ENCODE measurements at regions of chr7 and their contacts with region 1.

Region 1: DNA sequence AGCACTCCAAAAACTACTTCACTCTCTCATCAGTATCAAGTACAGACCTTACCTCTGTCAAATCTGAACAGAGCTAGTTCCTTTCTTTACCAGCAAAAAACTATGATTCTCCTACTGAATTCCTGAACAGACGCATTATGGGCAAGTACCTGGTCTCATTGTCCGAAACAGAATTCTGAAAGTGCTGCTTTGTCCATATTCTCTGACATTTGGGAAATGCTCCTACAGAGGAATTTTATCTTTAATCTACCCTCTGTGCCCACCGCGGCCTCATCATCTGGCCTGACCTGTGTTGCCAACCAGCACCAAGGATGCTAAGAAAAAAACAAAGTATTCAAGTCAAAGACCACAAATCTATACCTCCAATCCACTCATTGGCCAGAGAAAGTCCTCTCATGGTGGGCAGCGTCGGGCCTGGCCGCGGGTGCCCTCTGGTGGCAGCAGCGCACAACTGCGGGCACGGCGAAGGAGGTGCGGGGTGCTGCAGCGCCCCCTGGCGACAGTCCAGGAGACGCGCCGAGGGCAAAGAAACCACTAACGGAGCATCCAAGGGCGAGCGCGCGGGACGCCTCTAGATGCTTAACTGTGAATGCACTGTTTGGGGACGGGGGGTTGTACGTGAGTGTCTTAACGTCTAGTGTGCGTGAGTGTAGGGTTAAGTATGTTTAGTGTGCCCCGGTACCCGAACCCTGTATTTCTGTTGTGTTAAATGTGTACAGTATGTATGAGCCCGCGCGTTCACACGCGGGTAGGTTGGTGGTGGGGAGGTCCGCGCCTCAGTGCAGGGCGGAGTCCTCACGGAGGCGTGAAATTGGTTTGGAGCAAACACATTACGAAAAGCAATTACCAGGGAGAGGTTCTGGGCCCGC is 5.0 kb upstream of the GBX1 start:
- H3K4me3 ChIP-seq: no peak overlapping the region
- H3K27ac ChIP-seq: no peak overlapping the region
- H3K4me1 ChIP-seq: no peaks in the 10 kb centered on the region
- CTCF ChIP-seq: peak; percentile 100

Region 2: GRCh38 chr7:151123822-151124464 is 48.6 kb before region 1 on chr7:
- CTCF ChIA-PET with region 1: interaction called, 20 read pairs
- POLR2A ChIA-PET with region 1: no interaction called
- H3K4me3 ChIP-seq: no peak overlapping the region
- H3K27ac ChIP-seq: no peak overlapping the region
- H3K4me1 ChIP-seq: no peaks in the 10 kb centered on the region
- CTCF ChIP-seq: peak; percentile 99

Region 3: GRCh38 chr7:151146761-151147160 is 25.7 kb before region 1 on chr7:
- CTCF ChIA-PET with region 1: interaction called, 12 read pairs
- POLR2A ChIA-PET with region 1: no interaction called
- H3K4me3 ChIP-seq: no peak overlapping the region
- H3K27ac ChIP-seq: no peak overlapping the region
- H3K4me1 ChIP-seq: no peaks in the 10 kb centered on the region
- CTCF ChIP-seq: no peak

Region 4: DNA sequence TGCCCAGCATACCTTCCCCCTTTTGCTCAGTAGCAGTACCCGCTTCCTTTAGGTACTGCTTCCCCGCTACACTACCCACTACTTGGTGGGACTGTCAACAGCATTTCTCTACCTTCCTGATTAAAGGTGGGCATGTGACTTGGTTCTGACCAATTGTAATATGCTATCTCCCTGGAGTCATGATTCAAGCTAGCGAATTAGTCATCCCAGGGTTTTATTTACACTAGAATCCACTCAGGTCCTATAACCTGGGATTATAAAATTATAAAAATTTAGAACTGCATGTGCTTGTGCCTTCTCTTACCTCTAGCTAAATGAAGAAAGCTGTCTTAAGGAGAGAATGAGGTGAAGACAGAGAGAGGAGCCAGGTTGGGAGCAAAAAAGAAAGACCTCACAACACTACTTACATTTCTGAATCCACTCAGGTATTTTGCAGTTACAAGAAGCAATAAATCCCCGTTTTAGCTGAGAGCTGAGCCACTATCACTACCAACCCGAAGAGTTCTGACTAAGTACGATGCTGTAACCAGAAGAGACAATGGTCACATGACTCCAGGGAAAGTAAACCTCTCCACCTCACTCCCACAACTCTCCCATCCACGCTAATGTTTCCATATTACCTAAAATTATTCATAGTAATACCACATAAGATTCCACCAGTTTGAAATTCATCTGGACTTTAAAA is 14.7 kb before region 1 on chr7:
- CTCF ChIA-PET with region 1: interaction called, 13 read pairs
- POLR2A ChIA-PET with region 1: interaction called, 6 read pairs
- H3K4me3 ChIP-seq: no peak overlapping the region
- H3K27ac ChIP-seq: peak overlapping the region; percentile 25; the same call in 1 of the 2 replicates
- H3K4me1 ChIP-seq: peaks cover 9% of the 10 kb centered on the region; the same call in 1 of the 2 replicates
- CTCF ChIP-seq: no peak

Region 5: GRCh38 chr7:151232091-151232916 is 59.8 kb after region 1 on chr7 and contains the start of gene CHPF2:
- CTCF ChIA-PET with region 1: interaction called, 11 read pairs
- POLR2A ChIA-PET with region 1: no interaction called
- H3K4me3 ChIP-seq: peak within 1 kb of the TSS; percentile 93
- H3K27ac ChIP-seq: peak within 1 kb of the TSS; percentile 59
- H3K4me1 ChIP-seq: peaks cover 3% of the 10 kb centered on the region; the same call in 1 of the 2 replicates
- CTCF ChIP-seq: no peak

Measured in HEK293 (cell line).